Panc1 (cell line): ENCODE measurements at regions of chrX and their contacts with region 1.

Region 1: GRCh38 chrX:111288841-111289240 is 18.6 kb upstream of the CAPN6 start:
- DNase-seq: no peak
- ATAC-seq: no peak
- H3K4me3 ChIP-seq: no peak overlapping the region
- H3K27ac ChIP-seq: no peak overlapping the region
- H3K4me1 ChIP-seq: no peaks in the 10 kb centered on the region
- H3K27me3 ChIP-seq: no peaks in the 10 kb centered on the region
- CTCF ChIP-seq: no peak

Region 2: DNA sequence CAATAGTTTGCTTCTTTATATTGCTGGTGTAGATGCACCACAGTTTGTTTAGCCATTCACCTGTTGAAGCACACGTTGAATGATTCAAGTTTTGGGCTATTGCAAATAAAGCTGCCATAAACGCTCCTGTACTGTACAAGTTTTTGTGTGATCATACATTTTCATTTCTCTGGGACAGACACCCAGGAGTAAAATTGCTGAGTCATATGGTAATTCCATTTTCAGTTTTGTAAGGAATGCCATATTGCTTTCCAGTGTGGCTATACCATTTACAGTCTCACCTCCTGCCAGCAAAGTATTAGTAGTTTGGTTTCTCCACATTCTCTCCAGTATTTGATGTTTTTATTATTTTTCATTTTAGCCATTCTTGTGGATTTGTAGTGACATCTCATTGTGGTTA is 13.4 kb after region 1 on chrX:
- CTCF ChIA-PET with region 1: no interaction called
- POLR2A ChIA-PET with region 1: no interaction called
- in situ Hi-C with region 1: no loop called
- intact Hi-C with region 1: no loop called
- DNase-seq: no peak
- ATAC-seq: no peak
- H3K4me3 ChIP-seq: no peak overlapping the region
- H3K27ac ChIP-seq: no peak overlapping the region
- H3K4me1 ChIP-seq: no peaks in the 10 kb centered on the region
- H3K27me3 ChIP-seq: no peaks in the 10 kb centered on the region
- CTCF ChIP-seq: no peak

Region 3: GRCh38 chrX:112630187-112630586 is 1341.3 kb after region 1 on chrX:
- CTCF ChIA-PET with region 1: interaction called, 13 read pairs
- POLR2A ChIA-PET with region 1: no interaction called
- in situ Hi-C with region 1: no loop called
- intact Hi-C with region 1: no loop called
- DNase-seq: no peak
- ATAC-seq: no peak
- H3K4me3 ChIP-seq: no peak overlapping the region
- H3K27ac ChIP-seq: no peak overlapping the region
- H3K4me1 ChIP-seq: no peaks in the 10 kb centered on the region
- H3K27me3 ChIP-seq: no peaks in the 10 kb centered on the region
- CTCF ChIP-seq: no peak